ENCODE measurements at regions of chr2 and their contacts with region 1.

Region 1: GRCh38 chr2:120343433-120344105 is 2.4 kb upstream of the INHBB start:
- DNase-seq: peak; percentile 66
- H3K4me3 ChIP-seq: no peak overlapping the region
- H3K27ac ChIP-seq: no peak overlapping the region
- H3K4me1 ChIP-seq: no peaks in the 10 kb centered on the region
- H3K27me3 ChIP-seq: peaks cover 47 to 67% of the 10 kb centered on the region in 2 experiments
- CTCF ChIP-seq: peak; percentile 79 to 89
- POLR2A ChIP-seq: no peak

Region 2: DNA sequence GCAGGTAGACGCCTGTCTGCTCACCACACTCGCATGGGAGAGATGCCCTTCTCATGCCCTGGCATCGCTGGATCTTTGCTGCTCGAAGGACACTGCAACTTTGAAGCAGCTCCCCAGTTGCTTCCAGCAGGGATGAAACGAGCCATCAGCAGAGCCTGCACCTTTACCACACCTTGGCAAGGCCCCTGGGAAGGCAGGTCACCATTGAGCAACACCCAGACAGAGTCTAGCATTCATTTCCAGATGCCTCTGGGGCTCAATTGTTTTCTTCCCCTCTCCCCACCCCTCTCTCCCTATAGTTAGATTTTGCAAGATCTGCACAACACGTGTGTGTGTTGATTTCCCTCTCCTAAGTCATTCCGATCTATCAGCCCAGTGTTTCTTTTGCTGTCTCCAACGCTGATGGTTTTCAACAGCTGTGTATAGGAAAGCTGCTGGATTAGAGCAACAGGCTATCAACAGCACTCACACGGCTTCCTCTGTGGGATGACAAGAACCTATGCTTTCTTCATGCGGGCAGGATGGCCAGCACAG is 23.2 kb before region 1 on chr2:
- CTCF ChIA-PET with region 1: no interaction called
- POLR2A ChIA-PET with region 1: no interaction called
- dilution Hi-C with region 1: no loop called
- intact Hi-C with region 1: no loop called
- DNase-seq: no peak
- H3K4me3 ChIP-seq: no peak overlapping the region
- H3K27ac ChIP-seq: no peak overlapping the region
- H3K4me1 ChIP-seq: peaks cover 6% of the 10 kb centered on the region
- H3K27me3 ChIP-seq: peaks cover 6 to 11% of the 10 kb centered on the region in 2 experiments
- CTCF ChIP-seq: no peak
- POLR2A ChIP-seq: no peak

Region 3: DNA sequence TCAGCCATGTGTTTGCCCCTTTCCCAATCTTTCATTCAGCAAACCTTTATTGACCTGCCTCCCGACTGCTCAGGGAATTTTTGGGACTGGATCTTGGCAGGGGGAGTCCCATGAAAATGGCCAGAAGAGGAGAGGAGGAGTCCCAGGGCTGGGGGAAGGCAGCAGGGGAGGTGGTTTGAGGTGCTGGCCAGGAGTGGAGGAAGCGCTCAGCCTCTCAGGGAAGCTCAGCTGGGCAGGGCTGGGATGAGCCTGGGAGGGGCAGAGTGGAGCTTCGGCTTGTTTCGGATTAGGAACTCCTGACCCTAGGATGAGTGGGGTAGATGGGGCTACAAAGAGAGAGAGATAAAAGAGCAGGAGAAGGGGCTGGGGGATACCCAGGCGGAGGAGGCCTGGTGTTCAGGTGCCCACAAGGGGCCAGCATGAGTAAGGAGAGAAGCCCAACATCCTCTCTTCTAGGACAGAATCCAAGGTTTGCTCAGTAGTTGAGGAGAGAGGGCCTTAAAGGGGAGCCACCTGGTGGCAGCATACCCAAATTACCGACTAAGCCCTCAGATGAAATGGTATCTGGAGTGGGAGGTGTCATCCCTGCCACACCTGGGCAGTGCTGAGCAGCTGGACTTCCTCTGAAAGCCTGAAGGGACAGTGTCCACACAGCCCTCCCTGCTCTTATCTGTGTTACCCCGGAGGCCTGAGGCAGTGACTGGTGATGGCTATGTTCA is 93.5 kb after region 1 on chr2:
- CTCF ChIA-PET with region 1: interaction called, 18 read pairs
- POLR2A ChIA-PET with region 1: no interaction called
- dilution Hi-C with region 1: no loop called
- intact Hi-C with region 1: loop called (anchors 1 kb)
- DNase-seq: peak; percentile 8
- H3K4me3 ChIP-seq: no peak overlapping the region
- H3K27ac ChIP-seq: no peak overlapping the region
- H3K4me1 ChIP-seq: no peaks in the 10 kb centered on the region
- H3K27me3 ChIP-seq: peaks cover 12 to 19% of the 10 kb centered on the region in 2 experiments
- CTCF ChIP-seq: peak; percentile 26 to 32
- POLR2A ChIP-seq: no peak

Region 4: GRCh38 chr2:120448961-120449810 is 105.6 kb after region 1 on chr2:
- CTCF ChIA-PET with region 1: no interaction called
- POLR2A ChIA-PET with region 1: no interaction called
- dilution Hi-C with region 1: no loop called
- intact Hi-C with region 1: no loop called
- DNase-seq: no peak
- H3K4me3 ChIP-seq: no peak overlapping the region
- H3K27ac ChIP-seq: no peak overlapping the region
- H3K4me1 ChIP-seq: no peaks in the 10 kb centered on the region
- H3K27me3 ChIP-seq: peaks cover 0 to 2% of the 10 kb centered on the region in 2 experiments
- CTCF ChIP-seq: no peak
- POLR2A ChIP-seq: no peak

Region 5: DNA sequence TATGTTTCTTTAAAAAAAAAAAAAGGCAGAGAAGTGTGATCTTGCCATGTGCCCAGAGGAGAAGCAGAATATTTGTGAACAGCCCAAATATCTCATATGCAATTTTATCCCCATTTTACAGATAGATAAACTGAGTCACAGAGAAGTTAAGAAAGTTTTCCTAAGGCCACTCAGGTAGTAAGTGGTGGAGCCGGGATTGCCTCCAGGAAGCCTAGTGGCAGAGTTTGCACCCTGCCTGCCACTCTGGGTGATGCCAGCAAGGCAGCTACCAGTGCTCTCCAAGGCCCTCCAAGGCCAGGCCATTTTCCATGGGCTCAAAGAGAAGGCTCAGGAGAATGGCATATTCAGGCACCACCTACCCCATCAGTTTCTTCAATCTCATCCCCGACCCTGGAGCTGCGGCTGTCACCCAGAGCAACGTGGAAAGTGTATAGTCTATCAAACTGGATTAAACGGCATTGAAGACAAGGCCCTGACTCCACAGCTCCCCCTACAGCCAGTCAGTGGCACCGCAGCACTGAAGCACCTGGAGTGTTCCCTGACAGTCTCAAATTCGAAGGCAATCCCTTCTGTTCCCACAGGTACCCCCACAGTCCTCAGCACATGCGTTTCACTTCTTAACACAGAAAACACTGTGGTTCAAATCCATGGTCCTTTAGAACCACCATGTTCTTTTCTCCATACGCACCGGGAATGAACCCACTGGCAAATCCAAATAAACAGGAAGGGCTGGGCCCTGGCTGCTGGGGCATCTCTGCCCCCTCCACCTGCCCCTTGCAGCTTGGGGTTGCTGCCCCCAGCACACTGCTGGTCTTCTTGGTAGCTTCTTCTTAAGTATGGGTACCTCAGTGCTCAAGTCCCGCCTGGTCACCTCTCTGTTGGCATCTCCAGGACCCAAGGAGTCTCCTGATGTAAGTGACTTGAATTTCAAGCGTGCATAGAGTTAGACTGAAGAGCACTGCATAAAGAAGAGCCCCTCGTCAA is 177.7 kb after region 1 on chr2:
- CTCF ChIA-PET with region 1: interaction called, 19 read pairs
- POLR2A ChIA-PET with region 1: no interaction called
- dilution Hi-C with region 1: no loop called
- intact Hi-C with region 1: loop called (anchors 1 kb)
- DNase-seq: peak; percentile 50
- H3K4me3 ChIP-seq: no peak overlapping the region
- H3K27ac ChIP-seq: no peak overlapping the region
- H3K4me1 ChIP-seq: no peaks in the 10 kb centered on the region
- H3K27me3 ChIP-seq: peaks cover 35 to 57% of the 10 kb centered on the region in 2 experiments
- CTCF ChIP-seq: peak; percentile 95 to 96
- POLR2A ChIP-seq: no peak

Region 6: DNA sequence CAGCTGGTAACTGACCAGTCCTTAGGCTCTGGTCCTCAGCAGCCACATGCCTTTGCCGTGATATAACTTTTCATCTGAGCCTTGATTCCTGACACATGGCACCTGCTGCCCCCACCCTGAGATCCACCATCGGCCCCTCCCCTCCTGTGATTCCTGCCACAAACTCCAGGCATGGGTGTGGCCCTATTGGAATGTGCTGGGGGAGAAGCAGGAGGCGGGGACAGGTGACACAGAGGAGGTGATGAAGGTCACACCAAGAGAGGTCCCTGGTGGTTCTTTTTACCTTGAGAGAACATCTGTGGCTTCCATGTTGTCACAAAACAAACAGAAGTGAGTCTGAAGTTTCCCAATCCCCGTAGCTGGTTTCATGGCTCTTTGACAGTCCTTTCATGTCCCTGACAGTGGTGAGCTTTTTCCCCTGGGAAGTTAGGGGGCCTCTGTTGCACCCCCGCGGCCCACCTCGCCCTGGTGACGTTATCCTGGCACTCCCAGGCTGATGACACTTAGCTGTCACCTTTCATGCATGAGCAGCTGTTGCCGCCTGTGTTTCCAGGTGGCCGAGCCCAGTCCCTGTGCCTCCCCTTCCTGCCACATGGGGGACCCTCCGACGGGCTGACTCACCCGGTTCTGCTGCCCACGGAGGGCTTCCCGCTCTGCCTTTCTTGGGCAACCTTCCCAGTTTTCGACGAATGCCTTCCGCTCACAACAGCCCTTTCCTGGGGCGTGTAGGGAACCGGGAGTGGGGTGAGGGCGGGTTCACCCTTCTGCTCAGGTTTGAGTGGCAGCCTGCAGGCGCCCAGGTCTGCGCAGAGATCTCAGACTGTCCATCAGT is 325.8 kb after region 1 on chr2:
- CTCF ChIA-PET with region 1: interaction called, 9 read pairs
- POLR2A ChIA-PET with region 1: no interaction called
- dilution Hi-C with region 1: no loop called
- intact Hi-C with region 1: loop called (anchors 1 kb)
- DNase-seq: peak; percentile 68
- H3K4me3 ChIP-seq: no peak overlapping the region
- H3K27ac ChIP-seq: no peak overlapping the region
- H3K4me1 ChIP-seq: peaks cover 7% of the 10 kb centered on the region
- H3K27me3 ChIP-seq: peaks cover 2 to 7% of the 10 kb centered on the region in 2 experiments
- CTCF ChIP-seq: peak; percentile 20 to 61
- POLR2A ChIP-seq: no peak

Region 7: DNA sequence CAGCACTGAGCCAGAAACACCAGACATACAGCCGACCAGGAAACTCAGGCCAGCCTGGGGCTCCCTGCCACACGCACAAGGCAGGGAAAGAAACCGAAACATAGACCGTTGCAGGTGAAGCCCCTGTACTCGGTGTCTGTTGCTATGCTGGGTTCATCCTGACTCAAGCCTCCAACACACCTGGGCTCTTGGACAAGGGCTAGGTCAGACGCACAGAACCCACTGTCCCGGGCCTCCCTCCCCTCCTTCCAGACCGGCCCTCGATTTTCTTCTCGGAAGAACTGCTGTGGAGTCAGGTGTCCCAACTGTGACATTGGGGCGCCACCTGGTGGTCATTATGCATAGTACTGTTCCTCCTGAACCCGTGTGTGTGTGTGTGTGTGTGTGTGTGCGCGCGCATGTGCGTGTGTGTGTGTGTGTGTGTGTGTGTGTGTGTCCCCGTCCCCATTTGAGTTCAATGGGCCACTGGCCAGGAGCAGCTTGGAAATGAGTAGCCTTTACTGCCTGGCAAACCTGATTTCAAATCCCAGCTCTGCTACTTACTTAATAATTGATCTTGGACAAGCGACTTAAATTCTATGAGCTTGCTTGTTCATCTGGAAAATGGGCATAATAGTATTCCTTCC is 336.7 kb after region 1 on chr2:
- CTCF ChIA-PET with region 1: interaction called, 148 read pairs
- POLR2A ChIA-PET with region 1: no interaction called
- dilution Hi-C with region 1: no loop called
- intact Hi-C with region 1: loop called (anchors 1 kb)
- DNase-seq: peak; percentile 76
- H3K4me3 ChIP-seq: no peak overlapping the region
- H3K27ac ChIP-seq: no peak overlapping the region
- H3K4me1 ChIP-seq: no peaks in the 10 kb centered on the region
- H3K27me3 ChIP-seq: peaks cover 10 to 12% of the 10 kb centered on the region in 2 experiments
- CTCF ChIP-seq: peak; percentile 54 to 67
- POLR2A ChIP-seq: no peak

Region 8: GRCh38 chr2:120797421-120798221 is 454.1 kb after region 1 on chr2:
- CTCF ChIA-PET with region 1: no interaction called
- POLR2A ChIA-PET with region 1: no interaction called
- dilution Hi-C with region 1: no loop called
- intact Hi-C with region 1: no loop called
- DNase-seq: no peak
- H3K4me3 ChIP-seq: no peak overlapping the region
- H3K27ac ChIP-seq: no peak overlapping the region
- H3K4me1 ChIP-seq: no peaks in the 10 kb centered on the region
- H3K27me3 ChIP-seq: peaks cover 0 to under 1% of the 10 kb centered on the region in 2 experiments
- CTCF ChIP-seq: no peak
- POLR2A ChIP-seq: no peak

Region 9: DNA sequence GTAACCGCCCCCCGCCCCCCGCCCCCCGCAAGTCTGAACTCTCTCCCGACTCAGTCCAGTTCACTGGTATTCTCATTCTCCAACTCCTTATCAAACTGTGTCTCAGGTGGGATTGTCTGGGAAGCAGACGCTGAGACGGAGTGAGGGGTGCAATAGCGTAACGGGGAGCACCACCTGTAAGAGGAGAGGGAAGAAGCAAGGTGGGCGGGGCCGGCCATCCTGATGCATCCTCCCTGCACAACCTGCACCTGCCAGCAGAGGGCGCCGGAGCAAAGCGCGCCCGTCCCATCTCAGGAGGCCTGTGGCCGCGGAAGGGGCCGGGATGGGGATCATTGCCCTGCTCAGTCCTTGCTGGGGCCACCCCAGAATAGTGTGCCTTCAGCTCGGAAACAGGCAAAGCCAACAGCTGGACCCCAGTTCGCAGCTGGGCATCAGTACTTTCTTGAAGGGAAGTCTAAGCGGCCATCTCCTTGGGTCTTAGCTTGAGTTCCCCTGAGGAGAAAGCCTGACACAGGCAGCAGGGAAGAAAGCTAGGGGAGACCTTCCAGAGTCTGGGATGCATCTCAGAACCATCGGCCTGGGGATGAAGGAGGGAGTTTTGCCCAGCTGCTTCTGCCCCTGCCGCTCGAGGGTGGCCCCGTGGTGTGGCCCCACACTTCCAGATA is 733.4 kb after region 1 on chr2:
- CTCF ChIA-PET with region 1: interaction called, 7 read pairs
- POLR2A ChIA-PET with region 1: no interaction called
- dilution Hi-C with region 1: no loop called
- intact Hi-C with region 1: loop called (anchors 5 kb)
- DNase-seq: peak; percentile 33
- H3K4me3 ChIP-seq: no peak overlapping the region
- H3K27ac ChIP-seq: no peak overlapping the region
- H3K4me1 ChIP-seq: peaks cover 4% of the 10 kb centered on the region
- H3K27me3 ChIP-seq: peaks cover 9 to 10% of the 10 kb centered on the region in 2 experiments
- CTCF ChIP-seq: peak; percentile 97
- POLR2A ChIP-seq: no peak